ENCODE measurements at regions of chr16 and their contacts with region 1.

Region 1: DNA sequence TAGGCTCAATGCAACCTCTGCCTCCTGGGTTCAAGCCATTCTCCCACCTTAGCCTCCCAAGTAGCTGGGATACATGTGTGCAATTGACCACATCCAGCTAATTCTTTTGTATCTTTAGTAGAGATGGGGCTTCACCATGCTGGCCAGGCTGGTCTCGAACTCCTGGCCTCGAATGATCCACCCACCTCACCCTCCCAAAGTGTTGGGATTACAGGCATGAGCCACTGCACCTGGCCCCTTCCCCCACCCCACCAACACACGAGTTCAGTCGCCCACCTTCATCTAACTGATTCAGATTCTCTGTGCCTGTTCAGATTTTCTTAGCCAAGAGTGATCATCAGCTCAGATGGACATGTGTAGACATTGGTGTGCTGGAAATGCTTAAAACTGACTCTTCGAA is 25.0 kb upstream of the METTL9 start:
- DNase-seq: no peak
- H3K4me3 Mint-ChIP-seq: no peak overlapping the region
- H3K27ac Mint-ChIP-seq: no peak overlapping the region
- H3K4me1 Mint-ChIP-seq: no peaks in the 10 kb centered on the region
- H3K27me3 Mint-ChIP-seq: peaks cover 29% of the 10 kb centered on the region

Region 2: DNA sequence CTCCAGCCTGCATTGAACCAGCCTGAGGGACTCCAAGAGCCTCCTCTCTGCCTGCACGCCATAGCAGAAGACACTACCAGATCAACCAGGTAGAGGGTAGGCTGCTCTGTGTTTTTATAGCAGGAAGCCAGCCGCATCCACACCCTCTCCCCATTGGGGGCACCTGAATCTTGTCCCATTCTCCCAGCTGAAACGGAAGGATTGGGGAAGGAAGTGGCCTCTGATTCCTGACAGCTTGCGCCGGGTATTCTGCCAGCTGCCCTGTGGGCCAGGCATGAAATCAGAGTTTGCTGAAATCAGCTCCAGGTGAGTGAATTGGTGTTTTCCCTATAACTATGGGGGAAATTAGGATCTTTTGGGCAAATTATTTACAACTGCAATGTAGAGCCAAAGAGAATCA is 362.9 kb before region 1 on chr16 and contains the start of gene ZP2:
- intact Hi-C with region 1: loop called (anchors 5 kb)
- DNase-seq: no peak
- H3K4me3 Mint-ChIP-seq: no peak within 1 kb of the TSS
- H3K27ac Mint-ChIP-seq: no peak within 1 kb of the TSS
- H3K4me1 Mint-ChIP-seq: no peaks in the 10 kb centered on the region
- H3K27me3 Mint-ChIP-seq: peaks cover 9% of the 10 kb centered on the region
- total RNA-seq, gene ZP2: not detected in 2 replicates

Region 3: DNA sequence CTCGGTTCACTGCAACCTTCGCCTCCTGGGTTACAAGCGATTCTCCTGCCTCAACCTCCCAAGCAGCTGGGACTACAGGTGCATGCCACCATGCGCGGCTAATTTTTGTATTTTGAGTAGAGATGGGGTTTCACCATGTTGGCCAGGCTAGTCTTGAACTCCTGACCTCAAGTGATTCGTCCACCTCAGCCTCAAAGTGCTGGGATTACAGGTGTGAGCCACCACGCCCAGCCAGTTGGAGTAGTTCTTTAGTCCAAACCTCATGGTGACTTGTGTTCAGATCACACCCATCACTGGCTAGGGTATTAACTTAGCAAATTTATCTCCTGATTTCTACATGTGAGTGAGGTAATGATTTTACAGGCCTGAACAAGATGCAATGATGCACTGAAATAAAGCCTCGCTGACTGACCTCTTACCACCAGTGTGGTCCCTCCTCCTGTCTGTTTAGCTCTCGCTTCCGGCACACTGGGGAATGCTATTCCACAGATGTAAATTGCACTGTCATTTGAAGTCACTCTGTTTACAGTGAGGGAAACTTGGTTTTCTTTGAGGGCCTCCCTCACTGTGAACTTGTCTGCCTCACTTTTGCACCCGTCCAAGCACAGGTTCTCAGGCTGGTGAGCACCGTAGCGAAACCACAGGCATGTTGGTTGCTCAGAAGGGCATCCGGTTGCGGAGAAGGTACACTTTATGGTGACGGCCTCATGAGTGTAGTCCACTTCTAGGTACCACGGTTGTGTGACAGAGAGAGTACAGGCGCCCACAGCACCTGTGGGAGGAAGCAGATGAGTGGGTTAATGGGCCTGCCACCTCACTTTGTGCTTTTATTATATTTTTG is 72.6 kb after region 1 on chr16:
- intact Hi-C with region 1: no loop called
- DNase-seq: peak; percentile 76
- H3K4me3 Mint-ChIP-seq: peak overlapping the region; percentile 58
- H3K27ac Mint-ChIP-seq: peak overlapping the region; percentile 91
- H3K4me1 Mint-ChIP-seq: peaks cover 48% of the 10 kb centered on the region
- H3K27me3 Mint-ChIP-seq: no peaks in the 10 kb centered on the region

Measured in activated T-helper 2 cell treated with anti-CD3 and anti-CD28 coated beads, Interferon-gamma antibody, Interleukin-2, Interleukin-4, amounts not matched to agents 10 μg/mL and 5 μg/mL and 100 μg/mL, durations not matched to agents 14 hours and 24 hours and 36 hours (primary cell).